ENCODE measurements at regions of chr1 and their contacts with region 1.

Region 1: GRCh38 chr1:30085811-30086770 is 637.3 kb downstream of the MATN1 start:
- DNase-seq: peak; percentile 31
- ATAC-seq: peak; percentile 67
- H3K4me3 ChIP-seq: no peak overlapping the region
- H3K27ac ChIP-seq: peak overlapping the region; percentile 48; the same call in 1 of the 2 replicates
- H3K4me1 ChIP-seq: peaks cover 23% of the 10 kb centered on the region
- H3K27me3 ChIP-seq: no peaks in the 10 kb centered on the region; the same call in 1 of the 2 replicates
- CTCF ChIP-seq: peak; percentile 73
- POLR2A ChIP-seq: no peak
- RAD21 ChIP-seq: peak; percentile 74

Region 2: DNA sequence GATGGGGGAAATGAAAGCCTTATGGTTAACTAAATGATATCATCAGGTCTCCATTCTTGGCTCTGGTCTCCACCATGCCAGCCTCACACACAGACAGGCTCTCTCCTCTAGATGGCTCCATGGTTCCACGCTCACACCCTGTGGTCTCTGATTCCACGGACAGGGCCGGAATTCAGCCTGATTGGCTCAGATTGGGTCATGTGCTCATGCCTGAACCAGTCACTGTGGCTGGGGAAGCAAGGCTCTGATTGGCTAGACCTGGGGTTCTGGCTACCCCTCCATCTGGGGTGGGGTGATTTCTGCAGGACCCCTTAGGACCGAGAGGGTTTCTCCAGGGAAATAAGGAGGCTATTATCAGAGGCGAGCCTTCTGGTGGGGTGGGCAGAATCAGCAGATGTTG is 572.7 kb before region 1 on chr1:
- CTCF ChIA-PET with region 1: no interaction called
- POLR2A ChIA-PET with region 1: no interaction called
- dilution Hi-C with region 1: no loop called
- in situ Hi-C with region 1: no loop called
- intact Hi-C with region 1: loop called (anchors 10 kb)
- DNase-seq: peak; percentile 70
- ATAC-seq: peak; percentile 93
- H3K4me3 ChIP-seq: no peak overlapping the region
- H3K27ac ChIP-seq: no peak overlapping the region
- H3K4me1 ChIP-seq: no peaks in the 10 kb centered on the region
- H3K27me3 ChIP-seq: peaks cover 9% of the 10 kb centered on the region
- CTCF ChIP-seq: peak; percentile 85
- POLR2A ChIP-seq: 0 out of 2 replicates have a peak, but pooled peaks have one; percentile 29
- RAD21 ChIP-seq: peak; percentile 97

Region 3: GRCh38 chr1:29698033-29698432 is 388.1 kb before region 1 on chr1:
- CTCF ChIA-PET with region 1: no interaction called
- POLR2A ChIA-PET with region 1: no interaction called
- dilution Hi-C with region 1: no loop called
- in situ Hi-C with region 1: no loop called
- intact Hi-C with region 1: loop called (anchors 2 kb)
- DNase-seq: peak; percentile 59
- ATAC-seq: peak; percentile 97
- H3K4me3 ChIP-seq: no peak overlapping the region
- H3K27ac ChIP-seq: no peak overlapping the region
- H3K4me1 ChIP-seq: no peaks in the 10 kb centered on the region
- H3K27me3 ChIP-seq: no peaks in the 10 kb centered on the region; the same call in 1 of the 2 replicates
- CTCF ChIP-seq: peak; percentile 69
- POLR2A ChIP-seq: no peak
- RAD21 ChIP-seq: peak; percentile 66

Region 4: GRCh38 chr1:29703596-29704370 is 382.3 kb before region 1 on chr1:
- CTCF ChIA-PET with region 1: interaction called, 6 read pairs
- POLR2A ChIA-PET with region 1: no interaction called
- dilution Hi-C with region 1: no loop called
- in situ Hi-C with region 1: loop called (anchors 5 kb)
- intact Hi-C with region 1: loop called (anchors 2 kb)
- DNase-seq: peak; percentile 54
- ATAC-seq: peak; percentile 76
- H3K4me3 ChIP-seq: no peak overlapping the region
- H3K27ac ChIP-seq: no peak overlapping the region
- H3K4me1 ChIP-seq: peaks cover 4% of the 10 kb centered on the region
- H3K27me3 ChIP-seq: no peaks in the 10 kb centered on the region; the same call in 1 of the 2 replicates
- CTCF ChIP-seq: peak; percentile 74
- POLR2A ChIP-seq: no peak
- RAD21 ChIP-seq: peak; percentile 69

Region 5: DNA sequence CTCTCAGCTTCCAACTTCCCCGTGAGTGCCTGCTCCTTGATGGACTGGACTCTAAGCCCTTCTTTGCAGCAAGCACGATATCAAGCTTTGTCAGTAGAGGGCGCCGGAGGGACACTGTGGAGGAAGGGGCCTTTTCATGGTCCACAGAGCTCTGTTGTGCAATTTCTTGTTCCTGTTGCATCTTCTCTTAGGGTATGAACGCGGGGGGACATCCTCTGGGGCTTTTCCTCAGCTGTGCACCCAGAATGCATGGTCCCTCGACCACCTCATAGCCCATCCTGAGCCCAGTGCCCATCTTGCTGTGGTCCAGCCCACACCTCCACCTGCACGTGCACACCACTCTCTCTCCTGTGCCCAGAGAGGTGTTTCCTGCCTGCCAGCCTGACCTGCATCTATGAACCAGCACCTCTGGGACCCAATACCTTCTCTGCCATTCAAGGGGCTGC is 293.0 kb before region 1 on chr1:
- CTCF ChIA-PET with region 1: interaction called, 10 read pairs
- POLR2A ChIA-PET with region 1: no interaction called
- dilution Hi-C with region 1: no loop called
- in situ Hi-C with region 1: loop called (anchors 10 kb)
- intact Hi-C with region 1: loop called (anchors 1 kb)
- DNase-seq: peak; percentile 72
- ATAC-seq: peak; percentile 98
- H3K4me3 ChIP-seq: no peak overlapping the region
- H3K27ac ChIP-seq: no peak overlapping the region
- H3K4me1 ChIP-seq: no peaks in the 10 kb centered on the region
- H3K27me3 ChIP-seq: no peaks in the 10 kb centered on the region; the same call in 1 of the 2 replicates
- CTCF ChIP-seq: peak; percentile 83
- POLR2A ChIP-seq: no peak
- RAD21 ChIP-seq: peak; percentile 79

Region 6: GRCh38 chr1:29912425-29912824 is 173.7 kb before region 1 on chr1:
- CTCF ChIA-PET with region 1: no interaction called
- POLR2A ChIA-PET with region 1: no interaction called
- dilution Hi-C with region 1: no loop called
- in situ Hi-C with region 1: no loop called
- intact Hi-C with region 1: loop called (anchors 1 kb)
- DNase-seq: peak; percentile 54
- ATAC-seq: no peak; the same call in 1 of the 2 replicates
- H3K4me3 ChIP-seq: no peak overlapping the region
- H3K27ac ChIP-seq: no peak overlapping the region
- H3K4me1 ChIP-seq: no peaks in the 10 kb centered on the region
- H3K27me3 ChIP-seq: no peaks in the 10 kb centered on the region
- CTCF ChIP-seq: peak; percentile 54
- POLR2A ChIP-seq: no peak
- RAD21 ChIP-seq: peak; percentile 56

Region 7: DNA sequence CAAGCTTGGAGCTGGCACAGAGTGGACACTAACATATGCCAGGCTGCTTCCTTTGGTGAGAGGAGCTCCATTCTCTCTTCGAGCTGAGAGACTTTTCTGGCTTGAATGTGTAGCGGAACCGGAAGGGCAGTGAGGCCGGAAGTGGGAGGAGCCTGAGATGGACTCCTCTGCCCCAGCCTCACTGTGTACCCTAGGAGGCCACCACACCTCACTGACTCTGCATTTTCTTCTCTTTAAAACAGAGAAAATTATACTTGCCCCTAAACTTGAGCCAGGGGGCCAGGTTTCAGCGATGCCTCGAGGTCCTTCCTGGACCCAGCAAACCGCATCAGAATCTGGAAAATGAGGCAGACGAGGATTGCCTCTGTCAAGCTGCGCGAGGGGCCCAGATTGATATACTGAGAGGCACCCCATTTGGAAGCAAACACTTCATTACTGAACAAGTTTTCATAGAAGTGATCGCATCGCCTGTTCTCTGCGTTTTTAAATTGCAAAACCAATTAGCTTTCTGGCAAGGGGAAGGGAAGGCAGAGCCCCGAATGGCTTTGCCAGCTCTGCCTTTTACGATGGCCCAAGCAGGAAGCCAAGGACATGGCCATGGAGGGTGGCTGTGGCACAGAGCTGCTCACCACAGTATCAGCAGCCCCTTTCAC is 141.7 kb before region 1 on chr1:
- CTCF ChIA-PET with region 1: no interaction called
- POLR2A ChIA-PET with region 1: no interaction called
- dilution Hi-C with region 1: no loop called
- in situ Hi-C with region 1: no loop called
- intact Hi-C with region 1: no loop called
- DNase-seq: no peak
- ATAC-seq: no peak
- H3K4me3 ChIP-seq: no peak overlapping the region
- H3K27ac ChIP-seq: no peak overlapping the region
- H3K4me1 ChIP-seq: no peaks in the 10 kb centered on the region
- H3K27me3 ChIP-seq: no peaks in the 10 kb centered on the region
- CTCF ChIP-seq: no peak
- POLR2A ChIP-seq: no peak
- RAD21 ChIP-seq: no peak

Region 8: DNA sequence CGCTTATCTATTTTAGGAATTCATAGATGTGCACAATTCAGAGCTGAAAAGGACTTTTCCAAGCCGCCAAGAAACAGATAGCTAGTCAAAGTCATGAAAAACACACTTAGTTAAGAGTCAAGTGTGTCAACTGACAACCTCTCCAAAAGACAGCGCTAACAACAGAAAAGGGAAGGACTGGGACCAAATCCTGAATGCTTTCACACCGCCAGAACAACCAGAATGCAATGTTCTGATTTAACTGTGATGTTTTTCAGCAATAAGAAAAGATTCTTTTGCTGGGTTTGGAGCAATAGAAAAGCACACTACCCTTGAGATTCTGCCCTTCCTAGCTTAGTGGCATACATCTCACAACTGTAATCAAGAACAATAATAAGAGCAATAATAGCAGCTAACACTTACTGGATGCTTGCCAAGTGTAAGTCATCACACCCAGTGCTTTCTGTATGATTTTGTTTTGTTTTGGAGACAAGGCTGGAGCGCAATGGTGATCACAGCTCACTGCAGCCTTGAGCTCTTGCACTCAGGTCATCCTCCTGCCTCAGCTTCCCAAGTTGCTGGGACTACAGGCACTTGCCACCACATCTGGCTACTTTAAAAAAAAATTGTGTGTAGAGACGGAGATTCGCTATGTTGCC is 856.4 kb after region 1 on chr1:
- CTCF ChIA-PET with region 1: no interaction called
- POLR2A ChIA-PET with region 1: no interaction called
- dilution Hi-C with region 1: no loop called
- in situ Hi-C with region 1: no loop called
- intact Hi-C with region 1: no loop called
- DNase-seq: no peak
- ATAC-seq: no peak; the same call in 1 of the 2 replicates
- H3K4me3 ChIP-seq: no peak overlapping the region
- H3K27ac ChIP-seq: no peak overlapping the region
- H3K4me1 ChIP-seq: no peaks in the 10 kb centered on the region; the same call in 1 of the 2 replicates
- H3K27me3 ChIP-seq: no peaks in the 10 kb centered on the region
- CTCF ChIP-seq: no peak
- POLR2A ChIP-seq: no peak
- RAD21 ChIP-seq: no peak